Keratinocyte (primary cell): ENCODE measurements at regions of chr18 and their contacts with region 1.

Region 1: DNA sequence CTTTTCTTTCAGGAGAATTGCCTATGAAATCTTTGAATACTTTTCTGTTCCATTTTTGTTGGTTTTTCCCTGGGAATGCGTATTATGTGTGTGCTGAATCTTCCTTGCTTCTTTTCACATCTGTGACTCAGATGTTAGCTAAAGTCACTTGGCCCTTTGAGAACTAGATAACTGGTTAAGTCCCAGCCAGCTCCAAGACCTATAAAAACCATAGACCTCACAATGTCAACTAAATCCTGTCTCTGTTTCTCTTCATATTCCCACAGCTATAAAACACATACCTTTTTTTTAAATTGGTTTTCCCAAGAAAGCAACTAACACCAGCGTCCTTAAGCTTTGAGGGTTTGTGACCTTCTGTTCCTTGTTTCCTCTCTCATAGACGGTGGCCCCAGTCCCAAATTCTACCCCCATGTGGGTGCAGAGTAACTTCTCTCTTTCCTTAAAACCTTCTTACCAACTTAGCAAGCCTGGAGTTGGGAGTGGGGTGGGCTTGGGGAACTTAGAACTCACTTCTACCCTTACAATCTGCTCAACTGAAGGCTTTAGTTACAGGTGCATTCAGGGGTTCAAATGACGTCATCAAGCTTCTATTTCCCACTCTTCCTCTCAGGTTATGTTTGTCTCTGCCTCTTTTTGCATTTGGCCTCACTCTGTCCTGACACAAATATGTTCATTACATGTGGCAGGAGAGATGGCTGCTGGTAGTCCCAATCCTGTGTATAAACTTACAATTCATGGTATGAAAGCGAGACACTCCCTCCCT is 58.1 kb upstream of the TGIF1 start:
- DNase-seq: no peak
- H3K4me3 ChIP-seq: no peak overlapping the region
- H3K27ac ChIP-seq: no peak overlapping the region
- H3K4me1 ChIP-seq: peaks cover 2% of the 10 kb centered on the region
- H3K27me3 ChIP-seq: no peaks in the 10 kb centered on the region
- CTCF ChIP-seq: no peak

Region 2: GRCh38 chr18:3451183-3451988 is 59.5 kb after region 1 on chr18:
- dilution Hi-C with region 1: loop called (anchors 5 kb)
- DNase-seq: no peak
- H3K4me3 ChIP-seq: peak overlapping the region; percentile 94 to 100 (median 95)
- H3K27ac ChIP-seq: peak overlapping the region; percentile 99
- H3K4me1 ChIP-seq: peaks cover 34% of the 10 kb centered on the region
- H3K27me3 ChIP-seq: no peaks in the 10 kb centered on the region
- CTCF ChIP-seq: no peak